ENCODE measurements at regions of chr6 and their contacts with region 1.

Region 1: GRCh38 chr6:7725849-7726415 is at the start of gene BMP6:
- DNase-seq: peak; percentile 92
- H3K4me3 ChIP-seq: peak within 1 kb of the TSS; percentile 48
- H3K27ac ChIP-seq: no peak within 1 kb of the TSS
- H3K4me1 ChIP-seq: peaks cover 11% of the 10 kb centered on the region
- H3K27me3 ChIP-seq: peaks cover 45% of the 10 kb centered on the region
- CTCF ChIP-seq: no peak
- total RNA-seq, gene BMP6: 1.7 and 1.9 TPM in 2 replicates

Region 2: DNA sequence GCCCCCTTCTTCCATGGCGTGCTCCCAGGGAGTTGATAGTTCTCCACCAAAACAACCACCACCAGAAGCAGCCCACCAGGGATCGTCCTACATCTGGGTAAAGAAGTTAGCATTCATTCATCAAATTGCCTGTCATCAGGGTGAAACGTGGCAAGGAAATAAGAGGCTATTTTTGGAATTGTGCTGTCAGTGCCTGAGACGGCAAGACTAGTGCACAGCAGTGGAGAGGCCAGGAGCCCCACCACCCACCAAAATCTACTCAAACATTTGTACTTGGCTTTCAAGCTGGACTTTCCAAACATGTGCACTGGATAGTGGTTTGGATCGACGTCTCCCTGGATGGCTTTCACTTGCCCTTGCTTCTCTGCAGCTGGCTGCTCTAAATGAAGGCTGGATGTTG is 139.8 kb after region 1 on chr6:
- CTCF ChIA-PET with region 1: no interaction called
- POLR2A ChIA-PET with region 1: interaction called, 27 read pairs
- intact Hi-C with region 1: no loop called
- DNase-seq: no peak
- H3K4me3 ChIP-seq: no peak overlapping the region
- H3K27ac ChIP-seq: no peak overlapping the region
- H3K4me1 ChIP-seq: no peaks in the 10 kb centered on the region
- H3K27me3 ChIP-seq: no peaks in the 10 kb centered on the region
- CTCF ChIP-seq: no peak

Region 3: DNA sequence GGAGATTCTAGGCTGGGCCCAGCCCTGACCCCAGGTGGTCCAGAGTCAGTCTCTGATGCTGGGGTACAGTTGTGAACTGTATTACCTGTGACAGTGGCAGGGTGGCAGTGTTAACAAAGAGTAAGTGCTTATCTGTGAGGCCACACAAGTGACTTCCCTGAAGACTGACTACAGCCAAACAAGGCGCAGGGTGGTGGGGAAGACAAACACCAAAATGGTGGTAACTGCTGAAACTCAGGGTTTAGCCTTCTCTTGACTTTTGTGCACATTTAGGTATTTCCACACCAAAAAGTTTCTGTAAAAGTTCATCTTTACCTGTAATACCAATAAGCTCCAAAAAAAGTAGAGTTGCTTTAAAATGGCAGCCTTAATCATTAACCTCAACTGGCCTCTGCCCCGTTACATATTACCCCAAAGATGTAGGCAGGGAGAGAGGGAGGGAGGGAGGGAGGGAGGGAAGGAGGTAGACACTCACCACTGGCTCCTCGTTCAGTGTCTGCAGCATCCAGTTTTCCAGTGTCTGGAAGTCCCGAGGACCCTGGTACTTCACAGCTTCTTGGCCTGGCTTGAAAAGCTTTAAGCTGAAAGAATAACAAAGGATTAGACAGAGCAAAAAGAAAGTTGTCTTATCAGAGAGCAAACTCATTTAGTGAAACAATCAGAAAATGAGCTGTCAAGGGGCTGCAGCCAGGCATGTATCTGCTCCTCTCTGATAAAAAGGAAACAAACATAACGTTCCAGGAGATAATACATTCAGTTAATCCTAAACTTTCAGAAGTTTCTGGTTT is 173.4 kb after region 1 on chr6:
- CTCF ChIA-PET with region 1: no interaction called
- POLR2A ChIA-PET with region 1: no interaction called
- intact Hi-C with region 1: loop called (anchors 10 kb)
- DNase-seq: no peak
- H3K4me3 ChIP-seq: no peak overlapping the region
- H3K27ac ChIP-seq: no peak overlapping the region
- H3K4me1 ChIP-seq: no peaks in the 10 kb centered on the region
- H3K27me3 ChIP-seq: no peaks in the 10 kb centered on the region
- CTCF ChIP-seq: 0 out of 2 replicates have a peak, but pooled peaks have one; percentile 24

Region 4: GRCh38 chr6:7992002-7992815 is 266.3 kb after region 1 on chr6:
- CTCF ChIA-PET with region 1: interaction called, 4 read pairs
- POLR2A ChIA-PET with region 1: no interaction called
- intact Hi-C with region 1: loop called (anchors 5 kb)
- DNase-seq: peak; percentile 60
- H3K4me3 ChIP-seq: no peak overlapping the region
- H3K27ac ChIP-seq: no peak overlapping the region
- H3K4me1 ChIP-seq: peaks cover 12% of the 10 kb centered on the region
- H3K27me3 ChIP-seq: no peaks in the 10 kb centered on the region
- CTCF ChIP-seq: peak; percentile 48

Region 5: GRCh38 chr6:8006208-8006607 is 280.3 kb after region 1 on chr6:
- CTCF ChIA-PET with region 1: interaction called, 16 read pairs
- POLR2A ChIA-PET with region 1: no interaction called
- intact Hi-C with region 1: loop called (anchors 1 kb)
- DNase-seq: peak; percentile 46
- H3K4me3 ChIP-seq: no peak overlapping the region
- H3K27ac ChIP-seq: no peak overlapping the region
- H3K4me1 ChIP-seq: no peaks in the 10 kb centered on the region
- H3K27me3 ChIP-seq: no peaks in the 10 kb centered on the region
- CTCF ChIP-seq: peak; percentile 66

Region 6: DNA sequence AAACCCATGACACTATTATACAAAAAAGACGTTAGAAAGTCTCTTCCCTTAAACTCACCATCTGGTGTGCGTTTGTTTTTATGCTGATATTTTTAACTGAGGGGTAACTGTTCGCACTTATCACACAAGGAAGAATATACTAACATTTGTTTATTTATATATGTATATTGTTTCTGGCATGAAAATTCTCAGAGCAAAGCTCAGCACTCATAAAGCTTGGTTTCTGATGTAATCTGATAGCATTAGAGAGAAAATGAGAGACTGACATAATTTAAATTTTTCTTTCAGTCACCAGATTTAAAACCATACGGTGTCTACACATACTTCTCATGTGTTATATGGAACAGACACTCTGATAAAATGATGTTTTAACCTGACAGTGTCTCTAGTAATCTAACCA is 331.3 kb after region 1 on chr6:
- CTCF ChIA-PET with region 1: interaction called, 15 read pairs
- POLR2A ChIA-PET with region 1: no interaction called
- intact Hi-C with region 1: loop called (anchors 2 kb)
- DNase-seq: no peak
- H3K4me3 ChIP-seq: no peak overlapping the region
- H3K27ac ChIP-seq: no peak overlapping the region
- H3K4me1 ChIP-seq: no peaks in the 10 kb centered on the region
- H3K27me3 ChIP-seq: no peaks in the 10 kb centered on the region
- CTCF ChIP-seq: no peak

Region 7: GRCh38 chr6:8063761-8064637 is 338.1 kb after region 1 on chr6 and contains the start of gene BLOC1S5:
- CTCF ChIA-PET with region 1: interaction called, 15 read pairs
- POLR2A ChIA-PET with region 1: no interaction called
- intact Hi-C with region 1: no loop called
- DNase-seq: peak; percentile 99
- H3K4me3 ChIP-seq: peak within 1 kb of the TSS; percentile 80
- H3K27ac ChIP-seq: peak within 1 kb of the TSS; percentile 93
- H3K4me1 ChIP-seq: peaks cover 19% of the 10 kb centered on the region
- H3K27me3 ChIP-seq: no peaks in the 10 kb centered on the region
- CTCF ChIP-seq: no peak
- total RNA-seq, gene BLOC1S5: 21.8 and 22.6 TPM in 2 replicates